Activated CD4-positive, alpha-beta memory T cell treated with anti-CD3 and anti-CD28 coated beads for 36 hours (primary cell): ENCODE measurements at regions of chr6 and their contacts with region 1.

Region 1: DNA sequence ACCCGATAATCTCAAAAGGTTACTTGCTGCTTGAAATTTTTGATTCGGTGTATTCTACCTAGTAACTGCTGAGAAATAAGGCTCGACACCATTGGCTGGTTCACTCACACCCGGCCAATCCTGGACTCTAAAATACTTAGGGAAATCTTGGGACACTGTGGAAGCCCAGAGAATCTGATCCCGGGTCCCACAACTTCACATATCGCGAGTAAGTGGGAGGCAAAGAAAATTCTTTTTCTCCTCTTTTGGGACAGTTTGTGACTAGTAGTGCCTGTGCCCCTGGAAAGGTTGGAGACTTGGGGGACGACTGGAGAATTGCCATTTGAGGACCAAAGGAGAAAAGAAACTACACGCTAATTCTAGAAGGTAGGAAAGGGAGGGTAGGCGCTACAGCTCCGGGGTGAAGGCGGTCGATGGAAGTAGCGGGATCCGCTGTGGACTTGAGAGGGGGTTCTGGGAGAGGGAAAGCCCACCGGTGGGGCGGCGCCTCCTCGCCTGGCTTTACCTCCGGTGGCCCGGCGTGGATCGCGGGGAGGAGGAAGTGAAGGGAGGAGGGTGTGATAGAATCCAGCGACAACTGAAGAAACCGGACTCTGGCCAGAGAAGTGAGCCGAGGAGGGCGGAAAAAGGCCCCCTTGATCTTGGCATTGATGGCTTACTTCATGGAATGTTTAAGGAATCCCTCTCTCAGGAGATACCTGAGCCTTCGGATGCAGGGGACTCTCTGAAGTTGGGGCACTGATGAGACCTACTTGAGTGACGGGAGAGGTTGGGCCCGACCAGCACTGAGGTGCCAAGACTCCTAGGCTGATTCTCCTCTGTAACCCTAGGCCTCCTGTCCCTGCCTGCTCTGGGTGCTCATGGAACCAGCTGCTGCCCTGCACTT is 18.8 kb upstream of the BTN3A3 start:
- DNase-seq: peak; percentile 62
- H3K4me3 Mint-ChIP-seq: no peak overlapping the region
- H3K27ac Mint-ChIP-seq: no peak overlapping the region
- H3K4me1 Mint-ChIP-seq: peaks cover 7% of the 10 kb centered on the region
- H3K27me3 Mint-ChIP-seq: no peaks in the 10 kb centered on the region

Region 2: DNA sequence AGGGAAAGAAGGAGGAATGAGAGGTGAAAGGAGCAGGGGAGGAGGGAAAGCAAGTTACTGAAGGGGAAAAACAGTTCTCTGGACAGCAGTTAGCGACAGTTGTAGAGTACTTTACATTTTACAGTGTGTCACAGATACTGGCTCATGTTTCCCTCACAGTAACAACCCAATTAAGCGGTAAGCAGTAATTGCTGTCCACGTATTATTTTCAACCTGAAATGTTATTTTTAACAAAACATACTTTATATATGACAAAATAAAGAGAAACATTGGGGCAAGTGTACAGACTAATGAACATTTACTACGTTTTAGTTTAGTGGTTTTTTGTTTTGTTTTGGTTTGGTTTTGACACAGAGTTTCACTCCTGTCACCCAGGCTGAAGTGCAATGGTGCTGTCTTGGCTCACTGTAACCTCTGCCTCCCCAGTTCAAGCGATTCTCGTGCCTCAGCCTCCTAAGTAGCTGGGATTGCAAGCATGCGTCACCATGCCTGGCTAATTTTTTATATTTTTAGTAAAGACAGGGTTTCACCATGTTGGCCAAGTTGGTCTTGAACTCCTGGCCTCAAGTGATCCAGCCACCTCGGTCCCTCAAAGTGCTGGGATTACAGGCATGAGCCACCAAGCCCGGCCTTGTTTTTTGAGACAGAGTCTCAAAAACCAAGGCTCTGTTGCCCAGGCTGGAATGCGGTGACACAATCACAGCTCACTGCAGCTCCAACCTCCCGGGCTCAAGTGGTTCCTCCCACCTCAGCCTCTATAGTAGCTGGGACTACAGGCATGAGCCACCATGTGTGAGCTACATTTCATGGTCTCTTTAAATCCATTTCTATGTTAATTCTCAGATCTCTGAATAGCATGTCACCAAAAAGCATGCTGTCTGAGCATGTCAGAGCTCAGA is 79.1 kb before region 1 on chr6:
- CTCF ChIA-PET with region 1: interaction called, 5 read pairs
- POLR2A ChIA-PET with region 1: no interaction called
- intact Hi-C with region 1: loop called (anchors 1 kb)
- DNase-seq: peak; percentile 65
- H3K4me3 Mint-ChIP-seq: peak overlapping the region; percentile 76
- H3K27ac Mint-ChIP-seq: peak overlapping the region; percentile 69
- H3K4me1 Mint-ChIP-seq: peaks cover 8% of the 10 kb centered on the region
- H3K27me3 Mint-ChIP-seq: peaks cover 5% of the 10 kb centered on the region

Region 3: DNA sequence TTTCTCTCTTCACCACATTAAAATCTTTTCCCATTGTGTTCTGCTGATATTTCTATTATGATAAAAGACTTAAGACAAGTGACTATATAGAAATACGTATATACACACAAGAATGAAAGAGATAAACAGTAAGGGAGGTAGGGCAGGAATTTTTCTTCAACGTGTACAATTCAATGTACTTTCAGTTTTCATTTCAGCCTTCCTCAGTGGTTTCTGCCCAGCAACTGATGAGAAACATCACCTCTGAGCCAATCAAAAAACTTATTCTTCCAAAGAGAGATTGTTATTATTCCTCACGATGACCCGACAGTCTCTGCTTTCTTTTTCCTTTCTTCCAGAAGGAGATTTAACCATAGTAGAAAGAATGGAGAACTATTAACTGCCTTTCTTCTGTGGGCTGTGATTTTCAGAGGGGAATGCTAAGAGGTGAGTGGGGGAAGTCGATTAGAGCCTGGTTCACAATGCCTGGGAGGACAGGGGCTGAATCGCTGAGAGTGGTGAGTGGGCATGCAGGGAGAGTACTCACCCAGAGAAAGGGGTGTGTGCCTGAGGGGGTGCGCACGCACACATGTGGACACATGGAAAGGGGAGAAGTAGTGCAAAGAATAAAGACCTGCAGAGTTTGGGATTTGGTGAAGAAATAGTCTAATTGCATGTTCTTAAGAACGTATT is 19.4 kb before region 1 on chr6 and contains the start of gene BTN3A1:
- CTCF ChIA-PET with region 1: no interaction called
- POLR2A ChIA-PET with region 1: no interaction called
- intact Hi-C with region 1: loop called (anchors 2 kb)
- DNase-seq: peak; percentile 80
- H3K4me3 Mint-ChIP-seq: peak within 1 kb of the TSS; percentile 89
- H3K27ac Mint-ChIP-seq: peak within 1 kb of the TSS; percentile 95
- H3K4me1 Mint-ChIP-seq: peaks cover 47% of the 10 kb centered on the region
- H3K27me3 Mint-ChIP-seq: no peaks in the 10 kb centered on the region
- total RNA-seq, gene BTN3A1: 36.5 to 39.0 TPM